ENCODE measurements at regions of chr10 and their contacts with region 1.

Region 1: GRCh38 chr10:132354356-132355094 is 22.5 kb downstream of the LRRC27 start:
- DNase-seq: no peak
- H3K4me3 ChIP-seq: no peak overlapping the region
- H3K27ac ChIP-seq: no peak overlapping the region
- H3K4me1 ChIP-seq: no peaks in the 10 kb centered on the region
- H3K27me3 ChIP-seq: no peaks in the 10 kb centered on the region
- CTCF ChIP-seq: no peak
- EP300 ChIP-seq: no peak
- RAD21 ChIP-seq: no peak

Region 2: GRCh38 chr10:131997366-131998049 is 357.0 kb before region 1 on chr10:
- CTCF ChIA-PET with region 1: no interaction called
- POLR2A ChIA-PET with region 1: no interaction called
- DNase-seq: no peak
- H3K4me3 ChIP-seq: no peak overlapping the region
- H3K27ac ChIP-seq: no peak overlapping the region
- H3K4me1 ChIP-seq: no peaks in the 10 kb centered on the region; a peak in 1 of 4 replicates
- H3K27me3 ChIP-seq: no peaks in the 10 kb centered on the region; the same call in 1 of the 2 replicates
- CTCF ChIP-seq: no peak
- EP300 ChIP-seq: no peak
- RAD21 ChIP-seq: no peak

Region 3: DNA sequence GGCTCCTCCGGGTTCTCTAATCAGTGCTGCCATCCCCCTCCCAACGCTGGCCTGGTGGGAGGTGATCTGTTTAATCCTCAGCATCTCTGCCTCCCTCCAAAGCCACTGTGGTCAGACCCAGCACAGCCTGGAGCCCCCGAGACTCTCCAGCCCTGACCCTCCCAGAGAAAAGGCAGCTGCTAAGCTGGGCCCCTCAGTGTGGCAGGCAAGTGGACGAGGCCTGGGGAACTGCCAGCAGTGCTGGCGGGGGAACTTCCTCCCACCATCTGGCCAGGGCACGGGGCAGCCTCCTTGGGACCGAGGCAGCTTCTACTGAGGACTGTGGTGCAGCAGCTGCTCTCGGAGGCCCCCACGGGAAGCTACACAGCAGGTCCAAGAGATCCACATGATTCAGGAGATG is 116.7 kb before region 1 on chr10:
- CTCF ChIA-PET with region 1: interaction called, 12 read pairs
- POLR2A ChIA-PET with region 1: no interaction called
- DNase-seq: peak; percentile 84
- H3K4me3 ChIP-seq: no peak overlapping the region
- H3K27ac ChIP-seq: peak overlapping the region in 1 of 2 experiments; percentile 99; a peak in 2 of 4 replicates
- H3K4me1 ChIP-seq: peaks cover 0 to 60% of the 10 kb centered on the region in 2 experiments; a peak in 1 of 4 replicates
- H3K27me3 ChIP-seq: no peaks in the 10 kb centered on the region
- CTCF ChIP-seq: no peak
- EP300 ChIP-seq: no peak
- RAD21 ChIP-seq: no peak

Region 4: DNA sequence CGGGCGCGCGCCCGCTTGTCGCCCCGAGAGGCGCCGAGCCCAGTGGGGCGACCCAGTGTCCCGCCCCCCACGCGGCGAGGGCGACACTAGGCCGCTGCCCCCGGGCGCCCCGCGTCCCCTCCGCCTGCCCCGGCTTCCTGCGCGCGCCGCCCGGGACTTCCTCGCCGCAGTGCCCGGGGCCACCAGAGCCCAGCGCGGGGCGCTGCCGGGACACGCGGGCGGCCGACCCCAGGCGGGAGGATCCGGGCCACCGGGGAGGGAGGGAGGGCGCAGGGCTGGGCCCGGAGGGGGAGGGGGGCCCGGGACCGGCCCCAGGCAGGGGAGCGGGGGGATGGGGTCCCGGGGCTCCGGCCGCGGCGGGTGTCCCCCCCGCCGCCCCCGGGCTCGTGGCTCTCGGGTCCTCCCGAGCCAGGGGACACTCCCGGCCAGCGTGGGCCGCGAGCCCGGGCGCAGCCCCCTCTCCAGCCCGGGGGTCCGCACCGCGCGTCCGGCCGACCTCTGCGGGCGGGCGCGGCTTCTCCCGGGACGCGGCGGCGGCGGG is 42.0 kb after region 1 on chr10:
- CTCF ChIA-PET with region 1: no interaction called
- POLR2A ChIA-PET with region 1: no interaction called
- DNase-seq: peak; percentile 96
- H3K4me3 ChIP-seq: peak overlapping the region; percentile 51 to 73; a peak in 3 of 4 replicates
- H3K27ac ChIP-seq: peak overlapping the region in 1 of 2 experiments; percentile 54; a peak in 1 of 4 replicates
- H3K4me1 ChIP-seq: peaks cover 4 to 29% of the 10 kb centered on the region in 2 experiments; a peak in 2 of 4 replicates
- H3K27me3 ChIP-seq: no peaks in the 10 kb centered on the region
- CTCF ChIP-seq: 0 out of 2 replicates have a peak, but pooled peaks have one; percentile 7
- EP300 ChIP-seq: no peak
- RAD21 ChIP-seq: peak; percentile 18; the same call in 1 of the 2 replicates

Measured in SK-N-SH (cell line).